ENCODE measurements at regions of chr1 and their contacts with region 1.

Region 1: GRCh38 chr1:111656086-111657017 is 36.8 kb downstream of the RAP1A start:
- DNase-seq: peak in 1 of 10 donors; percentile 40

Region 2: GRCh38 chr1:111481387-111482221 is 174.7 kb before region 1 on chr1:
- intact Hi-C with region 1: loop called (anchors 1 kb)
- DNase-seq: peak; percentile 53 to 97 (median 81)

Region 3: GRCh38 chr1:111507411-111508201 is 148.7 kb before region 1 on chr1:
- intact Hi-C with region 1: loop called (anchors 1 kb)
- DNase-seq: peak in 4 of 10 donors; percentile 42 to 90 (median 62)